ENCODE measurements at regions of chr21 and their contacts with region 1.

Region 1: DNA sequence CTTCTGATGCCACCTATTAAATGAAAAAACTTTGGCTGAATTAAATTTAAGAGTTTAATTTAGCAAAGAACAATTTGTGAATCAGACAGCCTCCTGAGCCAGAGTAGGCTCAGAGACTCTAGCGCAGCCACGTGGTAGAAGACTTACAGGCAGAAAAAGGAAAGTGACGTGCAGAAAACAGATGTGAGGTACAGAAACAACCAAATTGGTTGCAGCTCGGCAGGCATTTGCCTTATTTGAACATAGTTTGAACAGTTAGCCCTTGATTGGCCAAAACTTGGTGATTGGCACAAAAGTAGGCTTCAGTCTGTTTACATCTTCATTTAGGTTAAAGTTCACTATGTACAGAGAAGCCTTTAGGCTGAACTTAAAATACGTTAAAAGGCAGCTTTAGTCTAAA is 22.9 kb downstream of the TCP10L start:
- DNase-seq: peak; percentile 72
- H3K4me3 ChIP-seq: no peak overlapping the region
- H3K27ac ChIP-seq: peak overlapping the region; percentile 31
- H3K4me1 ChIP-seq: no peaks in the 10 kb centered on the region
- H3K27me3 ChIP-seq: no peaks in the 10 kb centered on the region
- CTCF ChIP-seq: peak; percentile 61

Region 2: GRCh38 chr21:32307706-32308105 is 254.7 kb before region 1 on chr21:
- CTCF ChIA-PET with region 1: no interaction called
- POLR2A ChIA-PET with region 1: no interaction called
- intact Hi-C with region 1: no loop called
- DNase-seq: no peak
- H3K4me3 ChIP-seq: no peak overlapping the region
- H3K27ac ChIP-seq: no peak overlapping the region
- H3K4me1 ChIP-seq: no peaks in the 10 kb centered on the region
- H3K27me3 ChIP-seq: no peaks in the 10 kb centered on the region
- CTCF ChIP-seq: no peak

Region 3: DNA sequence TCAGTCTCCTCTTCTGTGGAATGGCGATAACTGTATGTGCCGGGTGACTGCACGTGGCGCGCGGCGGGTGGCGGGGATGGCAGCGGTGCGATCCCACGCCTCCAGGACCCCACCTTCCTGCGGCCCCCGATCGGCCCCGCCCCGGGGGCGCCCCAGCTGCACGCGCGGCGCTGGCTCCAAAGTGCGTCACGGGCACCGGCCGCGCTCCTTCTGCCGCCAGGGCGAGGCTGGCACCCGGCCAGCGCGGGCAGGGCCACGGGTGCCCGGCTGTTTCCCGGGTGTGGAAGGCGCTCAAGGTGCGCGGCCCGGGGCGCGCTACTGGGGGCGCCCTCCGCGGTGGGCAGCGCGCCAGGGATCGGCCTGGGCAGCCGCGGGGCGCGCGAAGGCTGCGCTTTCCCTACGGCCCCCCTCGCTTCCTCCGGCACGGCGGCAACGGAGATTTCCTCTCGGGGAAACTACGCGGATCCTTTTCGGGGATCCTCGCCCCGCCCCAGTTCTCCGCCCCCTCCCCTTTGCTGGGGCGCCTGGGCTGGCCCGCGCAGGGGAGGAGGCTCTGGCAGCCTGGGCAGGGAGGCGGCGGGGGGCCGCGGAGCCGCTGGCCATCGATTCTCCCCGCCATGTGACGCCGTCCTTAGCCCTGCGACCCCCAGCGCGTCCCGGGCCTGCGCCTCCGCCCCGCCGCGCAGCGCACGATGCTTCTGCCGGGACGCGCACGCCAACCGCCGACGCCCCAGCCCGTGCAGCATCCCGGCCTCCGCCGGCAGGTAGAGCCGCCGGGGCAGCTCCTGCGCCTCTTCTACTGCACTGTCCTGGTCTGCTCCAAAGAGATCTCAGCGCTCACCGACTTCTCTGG is 150.0 kb before region 1 on chr21 and contains the start of gene EVA1C:
- CTCF ChIA-PET with region 1: no interaction called
- POLR2A ChIA-PET with region 1: no interaction called
- intact Hi-C with region 1: loop called (anchors 2 kb)
- DNase-seq: peak; percentile 63
- H3K4me3 ChIP-seq: peak within 1 kb of the TSS; percentile 67
- H3K27ac ChIP-seq: peak within 1 kb of the TSS; percentile 79
- H3K4me1 ChIP-seq: peaks cover 17% of the 10 kb centered on the region
- H3K27me3 ChIP-seq: no peaks in the 10 kb centered on the region
- CTCF ChIP-seq: no peak
- total RNA-seq, gene EVA1C: 4.3 and 7.2 TPM in 2 replicates

Measured in A673 (cell line).